ENCODE measurements at regions of chr2 and their contacts with region 1.

Region 1: GRCh38 chr2:175187378-175187777 is 5.9 kb upstream of the ATP5MC3 start:
- DNase-seq: no peak
- ATAC-seq: peak; percentile 90
- H3K4me3 ChIP-seq: no peak overlapping the region
- H3K27ac ChIP-seq: no peak overlapping the region
- H3K4me1 ChIP-seq: no peaks in the 10 kb centered on the region
- H3K27me3 ChIP-seq: no peaks in the 10 kb centered on the region
- CTCF ChIP-seq: peak; percentile 50 to 64 (median 61)
- EP300 ChIP-seq: no peak
- POLR2A ChIP-seq: no peak
- RAD21 ChIP-seq: peak; percentile 71

Region 2: DNA sequence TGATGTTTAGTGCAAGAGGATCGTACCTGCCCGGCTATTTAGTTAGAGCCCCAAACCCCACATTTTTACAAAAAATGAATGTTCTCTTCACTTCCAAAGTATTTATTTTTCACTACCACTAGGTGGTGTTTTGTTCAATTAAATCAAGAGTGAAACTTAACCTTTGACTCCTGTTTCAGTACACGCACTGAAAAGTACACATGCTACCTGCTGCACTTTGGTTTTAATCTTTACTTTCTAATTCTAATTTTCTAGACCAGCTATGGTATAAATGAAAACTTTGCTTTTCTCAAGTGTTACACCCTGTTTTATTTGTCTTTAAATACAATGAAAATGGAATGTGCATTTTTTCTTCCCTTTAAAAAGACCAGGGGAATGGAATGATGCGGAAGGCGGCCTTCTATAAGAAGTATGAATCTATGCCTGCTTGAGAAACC is 150.8 kb before region 1 on chr2:
- CTCF ChIA-PET with region 1: interaction called, 5 read pairs
- POLR2A ChIA-PET with region 1: no interaction called
- RAD21 ChIA-PET with region 1: no interaction called
- SMC1A ChIA-PET with region 1: no interaction called
- in situ Hi-C with region 1: no loop called
- intact Hi-C with region 1: loop called (anchors 5 kb)
- DNase-seq: no peak
- ATAC-seq: peak; percentile 68
- H3K4me3 ChIP-seq: no peak overlapping the region
- H3K27ac ChIP-seq: no peak overlapping the region
- H3K4me1 ChIP-seq: no peaks in the 10 kb centered on the region
- H3K27me3 ChIP-seq: no peaks in the 10 kb centered on the region
- CTCF ChIP-seq: peak; percentile 35 to 48 (median 41); a peak in 5 of 6 replicates
- EP300 ChIP-seq: no peak
- POLR2A ChIP-seq: no peak
- RAD21 ChIP-seq: peak; percentile 37; the same call in 1 of the 2 replicates

Region 3: DNA sequence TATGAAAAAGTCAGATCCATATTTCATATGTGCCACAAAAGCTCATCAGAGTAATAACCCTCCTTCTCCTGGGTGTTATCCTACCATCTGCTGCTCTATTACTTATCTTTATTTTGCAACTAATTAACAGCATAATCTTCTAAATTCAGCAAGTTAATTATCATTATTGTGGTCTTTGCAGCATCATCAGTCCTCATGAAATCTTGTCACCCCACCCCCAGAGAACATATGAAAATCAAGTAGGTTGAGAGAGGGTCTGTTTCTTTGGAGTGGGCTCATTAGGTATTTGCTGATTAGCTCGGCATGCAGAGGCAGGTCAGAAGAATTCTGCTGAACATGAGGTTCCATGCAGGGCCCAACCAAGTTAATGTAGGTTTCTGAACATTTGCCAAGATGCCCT is 84.2 kb before region 1 on chr2:
- CTCF ChIA-PET with region 1: interaction called, 14 read pairs
- POLR2A ChIA-PET with region 1: interaction called, 5 read pairs
- RAD21 ChIA-PET with region 1: interaction called, 3 read pairs
- SMC1A ChIA-PET with region 1: interaction called, 3 read pairs
- in situ Hi-C with region 1: no loop called
- intact Hi-C with region 1: no loop called
- DNase-seq: no peak
- ATAC-seq: no peak
- H3K4me3 ChIP-seq: no peak overlapping the region
- H3K27ac ChIP-seq: no peak overlapping the region
- H3K4me1 ChIP-seq: no peaks in the 10 kb centered on the region
- H3K27me3 ChIP-seq: no peaks in the 10 kb centered on the region
- CTCF ChIP-seq: no peak
- EP300 ChIP-seq: no peak
- POLR2A ChIP-seq: no peak
- RAD21 ChIP-seq: no peak

Region 4: DNA sequence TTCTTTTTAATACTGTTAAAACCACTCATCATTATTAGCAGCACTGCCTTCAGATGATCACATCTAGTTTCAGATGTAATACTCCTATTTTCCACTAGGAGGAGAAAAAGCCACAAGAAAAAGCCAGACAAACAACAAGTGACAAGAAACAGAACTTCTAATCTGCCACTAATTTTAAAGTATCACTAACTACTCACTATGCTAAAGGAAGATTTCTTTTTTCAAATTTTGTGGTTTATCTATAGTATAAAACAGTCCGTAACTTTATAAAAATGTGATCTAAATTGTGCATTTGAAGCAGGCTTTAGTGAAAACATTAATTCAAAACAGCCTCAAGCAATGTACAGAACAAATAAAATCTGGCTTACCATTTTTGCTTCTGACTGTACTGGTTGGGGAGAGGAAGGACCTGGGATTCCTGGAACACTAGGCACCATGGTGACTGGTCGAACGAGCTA is 76.1 kb before region 1 on chr2:
- CTCF ChIA-PET with region 1: interaction called, 14 read pairs
- POLR2A ChIA-PET with region 1: interaction called, 5 read pairs
- RAD21 ChIA-PET with region 1: interaction called, 3 read pairs
- SMC1A ChIA-PET with region 1: interaction called, 3 read pairs
- in situ Hi-C with region 1: no loop called
- intact Hi-C with region 1: loop called (anchors 1 kb)
- DNase-seq: peak; percentile 7
- ATAC-seq: peak; percentile 83
- H3K4me3 ChIP-seq: no peak overlapping the region
- H3K27ac ChIP-seq: no peak overlapping the region
- H3K4me1 ChIP-seq: no peaks in the 10 kb centered on the region
- H3K27me3 ChIP-seq: no peaks in the 10 kb centered on the region
- CTCF ChIP-seq: peak; percentile 62 to 69 (median 67)
- EP300 ChIP-seq: no peak
- POLR2A ChIP-seq: no peak
- RAD21 ChIP-seq: peak; percentile 81

Region 5: DNA sequence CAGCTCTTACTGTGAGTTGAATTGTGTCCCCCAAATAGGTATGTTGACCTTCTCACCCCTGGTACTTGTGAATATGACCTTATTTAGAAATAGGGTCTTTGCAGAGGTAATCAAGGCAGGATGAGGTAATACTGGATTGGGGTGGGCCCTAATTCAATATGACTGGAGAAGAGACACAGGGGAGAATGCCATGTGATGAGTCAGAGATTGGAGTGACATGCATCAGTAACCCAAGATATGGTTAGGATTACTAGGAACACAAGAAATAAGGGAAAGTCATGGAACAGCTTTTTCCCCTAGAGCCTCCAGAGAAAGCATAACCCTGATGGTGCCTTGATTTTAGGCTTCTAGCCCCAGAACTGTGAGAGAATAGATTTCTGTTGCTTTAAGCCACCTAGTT is 31.2 kb after region 1 on chr2:
- CTCF ChIA-PET with region 1: no interaction called
- POLR2A ChIA-PET with region 1: no interaction called
- RAD21 ChIA-PET with region 1: no interaction called
- SMC1A ChIA-PET with region 1: no interaction called
- in situ Hi-C with region 1: no loop called
- intact Hi-C with region 1: no loop called
- DNase-seq: no peak
- ATAC-seq: no peak
- H3K4me3 ChIP-seq: no peak overlapping the region
- H3K27ac ChIP-seq: no peak overlapping the region
- H3K4me1 ChIP-seq: no peaks in the 10 kb centered on the region
- H3K27me3 ChIP-seq: no peaks in the 10 kb centered on the region
- CTCF ChIP-seq: no peak
- EP300 ChIP-seq: no peak
- POLR2A ChIP-seq: no peak
- RAD21 ChIP-seq: no peak